Adrenal gland (tissue), 19 donors: ENCODE measurements at regions of chr12 and their contacts with region 1.

Region 1: DNA sequence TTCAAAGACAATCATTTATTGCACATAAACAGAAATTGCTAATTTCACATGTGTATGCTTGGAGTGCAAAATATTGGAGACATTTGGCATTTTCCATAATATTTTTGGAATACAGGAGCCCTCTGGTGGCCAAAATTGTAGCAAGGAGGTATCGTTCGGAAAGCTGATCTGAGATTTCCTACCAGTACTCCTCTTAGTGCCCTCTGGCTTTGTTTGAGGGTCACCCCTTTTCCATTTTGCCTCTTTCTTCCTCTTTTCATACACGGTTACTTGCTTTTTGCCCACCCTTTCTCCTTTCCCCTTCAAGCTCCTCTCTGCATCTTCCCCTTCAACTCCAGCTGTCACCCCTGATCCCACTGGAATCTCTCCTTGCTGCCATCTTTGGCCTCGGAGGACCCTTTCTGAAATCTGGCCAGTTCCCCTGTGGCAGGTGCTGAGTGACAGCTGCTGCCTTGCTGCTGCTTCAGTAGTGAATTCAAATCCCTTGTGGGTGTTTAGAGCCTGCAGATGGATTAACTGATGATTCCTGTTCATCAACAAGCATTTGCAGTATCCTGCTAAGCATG is 164.6 kb upstream of the PARP11 start:
- DNase-seq: peak; percentile 48 to 85 (median 72)
- H3K4me3 ChIP-seq: no peak overlapping the region
- H3K27ac ChIP-seq: no peak overlapping the region
- H3K4me1 ChIP-seq: peaks cover 9 to 12% of the 10 kb centered on the region in 2 donors
- H3K27me3 ChIP-seq: no peaks in the 10 kb centered on the region
- CTCF ChIP-seq: peak; percentile 56 to 91 (median 86)
- POLR2A ChIP-seq: no peak

Region 2: DNA sequence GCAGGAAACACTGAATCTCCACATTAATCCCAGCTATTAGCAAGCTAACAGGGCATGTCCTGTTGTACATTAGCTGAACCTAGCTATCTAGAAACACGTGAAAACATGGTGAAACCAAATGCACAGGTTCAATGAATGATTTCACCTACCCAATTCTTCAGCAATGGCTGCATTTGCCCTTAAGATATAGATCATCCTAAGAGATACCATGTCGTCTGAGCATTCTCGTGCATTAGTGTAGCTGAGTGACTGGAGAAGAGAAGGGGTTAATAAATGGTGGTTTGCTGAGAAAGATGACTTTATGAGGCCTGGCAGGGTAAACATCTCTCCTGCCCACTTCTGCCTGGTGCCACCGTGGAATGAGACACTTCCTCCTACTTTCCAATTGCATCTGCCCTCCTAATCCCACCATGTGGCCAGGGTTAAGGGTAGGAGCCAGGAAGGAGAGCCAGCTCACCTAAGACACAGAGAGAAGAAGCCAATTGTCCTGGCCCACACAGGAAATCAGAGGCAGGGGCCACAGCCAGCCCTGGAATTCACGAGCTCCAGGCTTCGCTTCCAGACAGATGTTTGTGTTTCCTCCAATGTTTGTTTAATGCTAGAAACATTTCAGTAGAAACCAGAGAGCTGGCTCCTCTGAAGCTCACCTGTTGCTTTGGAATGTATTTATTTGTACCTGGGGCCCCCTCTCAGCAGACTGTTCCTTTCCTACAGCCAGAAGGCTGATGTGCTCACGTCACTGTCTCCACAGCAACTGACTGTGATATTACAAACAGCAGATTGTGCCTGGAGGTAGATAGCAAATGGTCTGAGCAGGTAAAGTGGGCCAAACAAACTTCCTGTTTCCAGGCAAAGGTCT is 38.6 kb before region 1 on chr12:
- intact Hi-C with region 1: loop called (anchors 2 to 5 kb)
- DNase-seq: peak in 1 of 7 donors; percentile 57
- H3K4me3 ChIP-seq: no peak overlapping the region
- H3K27ac ChIP-seq: no peak overlapping the region
- H3K4me1 ChIP-seq: no peaks in the 10 kb centered on the region
- H3K27me3 ChIP-seq: no peaks in the 10 kb centered on the region
- CTCF ChIP-seq: no peak
- POLR2A ChIP-seq: no peak